ENCODE measurements at regions of chr19 and their contacts with region 1.

Region 1: DNA sequence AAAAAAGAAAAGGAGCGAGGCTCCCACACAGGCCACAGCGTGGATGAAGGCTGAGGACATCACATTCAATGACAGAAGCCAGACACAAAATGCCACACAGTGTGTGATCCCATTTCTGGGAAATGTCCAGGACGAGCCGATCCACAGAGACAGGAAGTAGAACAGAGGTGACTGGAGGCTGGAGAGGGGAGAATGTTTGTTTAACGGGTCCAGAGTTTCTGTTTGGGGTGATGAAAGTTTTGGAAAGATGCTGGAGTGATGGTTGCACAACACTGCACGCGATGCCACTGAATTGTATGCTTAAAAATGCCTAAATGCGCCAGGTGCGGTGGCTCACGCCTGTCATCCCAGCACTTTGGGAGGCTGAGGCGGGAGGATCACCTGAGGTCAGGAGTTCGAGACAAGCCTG is 650 bp upstream of the FUT5 start:
- DNase-seq: no peak
- ATAC-seq: peak in 5 of 8 donors; percentile 43 to 89 (median 52)
- H3K4me3 ChIP-seq: no peak overlapping the region
- H3K27ac ChIP-seq: no peak overlapping the region
- H3K4me1 ChIP-seq: peaks cover 0 to 3% (median 0%) of the 10 kb centered on the region in 9 donors
- H3K27me3 ChIP-seq: no peaks in the 10 kb centered on the region
- CTCF ChIP-seq: no peak

Region 2: DNA sequence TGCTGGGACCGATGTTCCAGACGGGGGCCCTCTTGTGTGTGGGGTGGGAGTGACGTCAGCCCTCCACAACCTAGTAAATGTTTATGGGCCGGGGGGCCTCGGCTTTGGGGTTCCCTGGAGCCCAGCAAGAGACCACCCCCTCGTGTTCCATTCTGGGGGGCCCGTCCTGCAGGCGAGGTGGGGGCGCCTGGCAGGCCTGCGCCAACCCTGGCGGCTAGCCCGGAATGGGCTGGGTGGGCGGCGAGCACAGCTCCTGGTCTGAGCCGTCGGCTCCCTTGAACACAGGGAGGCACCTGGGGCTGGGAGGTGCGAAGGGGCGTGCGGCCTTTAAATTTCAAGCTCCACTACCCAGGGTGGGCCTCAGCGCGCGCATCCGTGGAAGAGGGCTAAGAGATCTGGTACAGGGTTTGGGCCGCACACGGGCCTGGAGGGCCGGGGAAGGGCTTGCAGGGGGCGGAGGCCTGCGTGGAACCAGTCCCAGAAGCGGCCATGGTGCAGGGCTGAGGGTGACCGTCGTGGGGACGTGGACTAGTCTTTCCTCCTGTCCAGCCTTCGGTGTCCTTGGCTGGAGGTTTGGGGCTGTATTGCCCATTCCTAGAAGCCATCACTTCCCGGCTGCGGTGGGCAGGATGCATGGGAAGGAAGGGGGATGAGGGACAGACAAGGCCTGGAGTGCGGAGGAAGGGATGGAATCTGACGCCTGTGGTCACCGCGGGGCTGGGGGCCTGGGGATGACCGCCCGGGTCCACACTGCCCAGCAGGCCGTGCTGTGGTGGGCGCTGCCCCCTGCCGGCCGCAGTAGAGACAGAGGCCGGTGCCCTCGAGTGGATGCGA is 21.2 kb after region 1 on chr19:
- intact Hi-C with region 1: no loop called
- DNase-seq: peak in 1 of 2 donors; percentile 57
- ATAC-seq: peak in 7 of 8 donors; percentile 29 to 61 (median 44)
- H3K4me3 ChIP-seq: no peak overlapping the region
- H3K27ac ChIP-seq: peak overlapping the region in 1 of 10 donors; percentile 90
- H3K4me1 ChIP-seq: peaks cover 9 to 56% (median 33%) of the 10 kb centered on the region in 9 donors
- H3K27me3 ChIP-seq: peaks cover 0 to 18% (median 10%) of the 10 kb centered on the region in 7 donors
- CTCF ChIP-seq: peak; percentile 51 to 69 (median 66)

Region 3: GRCh38 chr19:6199240-6199983 is 328.4 kb after region 1 on chr19:
- intact Hi-C with region 1: no loop called
- DNase-seq: peak; percentile 98 to 100
- ATAC-seq: peak; percentile 97 to 99 (median 98)
- H3K4me3 ChIP-seq: peak overlapping the region; percentile 40 to 99 (median 66)
- H3K27ac ChIP-seq: peak overlapping the region in 9 of 10 donors; percentile 29 to 87 (median 75)
- H3K4me1 ChIP-seq: peaks cover 4 to 20% (median 11%) of the 10 kb centered on the region in 9 donors
- H3K27me3 ChIP-seq: no peaks in the 10 kb centered on the region
- CTCF ChIP-seq: peak in 8 of 9 donors; percentile 13 to 55 (median 44)

Region 4: DNA sequence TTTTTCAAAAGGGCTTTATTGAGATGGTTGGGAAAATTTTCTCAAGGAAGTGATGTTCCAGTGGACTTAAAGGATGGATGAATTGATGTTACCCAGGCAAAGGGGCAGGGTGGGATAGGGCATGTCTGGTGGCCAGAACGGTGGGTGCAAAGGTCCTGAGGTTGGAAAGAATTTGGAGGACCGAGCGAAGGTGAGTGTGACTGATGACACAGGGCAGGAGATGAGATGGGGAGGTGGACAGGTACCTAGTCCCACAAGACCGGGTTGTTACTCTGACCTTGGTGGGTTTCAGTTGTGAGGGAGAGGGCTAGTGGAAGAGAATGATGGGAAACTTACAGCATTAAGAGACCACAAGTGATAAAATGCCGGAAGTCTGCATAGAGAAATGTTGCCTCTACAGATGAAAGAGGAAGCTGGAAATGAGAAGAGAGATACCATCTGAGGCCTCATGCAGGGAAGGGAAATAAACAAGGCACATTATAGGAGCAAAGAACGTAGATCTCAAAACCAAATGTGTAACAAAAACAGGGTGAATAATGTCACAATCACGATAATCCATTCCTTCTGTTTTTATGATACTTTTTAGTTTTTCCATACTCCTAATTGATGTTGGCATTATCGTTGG is 1020.9 kb after region 1 on chr19:
- intact Hi-C with region 1: loop called in 1 of 10 experiments (anchors 10 kb)
- DNase-seq: no peak
- ATAC-seq: no peak
- H3K4me3 ChIP-seq: no peak overlapping the region
- H3K27ac ChIP-seq: peak overlapping the region in 1 of 10 donors; percentile 80
- H3K4me1 ChIP-seq: peaks cover 0 to 28% (median 0%) of the 10 kb centered on the region in 9 donors
- H3K27me3 ChIP-seq: peaks cover 0 to 10% (median 0%) of the 10 kb centered on the region in 7 donors
- CTCF ChIP-seq: no peak